WTC11 (cell line): ENCODE measurements at regions of chr14 and their contacts with region 1.

Region 1: DNA sequence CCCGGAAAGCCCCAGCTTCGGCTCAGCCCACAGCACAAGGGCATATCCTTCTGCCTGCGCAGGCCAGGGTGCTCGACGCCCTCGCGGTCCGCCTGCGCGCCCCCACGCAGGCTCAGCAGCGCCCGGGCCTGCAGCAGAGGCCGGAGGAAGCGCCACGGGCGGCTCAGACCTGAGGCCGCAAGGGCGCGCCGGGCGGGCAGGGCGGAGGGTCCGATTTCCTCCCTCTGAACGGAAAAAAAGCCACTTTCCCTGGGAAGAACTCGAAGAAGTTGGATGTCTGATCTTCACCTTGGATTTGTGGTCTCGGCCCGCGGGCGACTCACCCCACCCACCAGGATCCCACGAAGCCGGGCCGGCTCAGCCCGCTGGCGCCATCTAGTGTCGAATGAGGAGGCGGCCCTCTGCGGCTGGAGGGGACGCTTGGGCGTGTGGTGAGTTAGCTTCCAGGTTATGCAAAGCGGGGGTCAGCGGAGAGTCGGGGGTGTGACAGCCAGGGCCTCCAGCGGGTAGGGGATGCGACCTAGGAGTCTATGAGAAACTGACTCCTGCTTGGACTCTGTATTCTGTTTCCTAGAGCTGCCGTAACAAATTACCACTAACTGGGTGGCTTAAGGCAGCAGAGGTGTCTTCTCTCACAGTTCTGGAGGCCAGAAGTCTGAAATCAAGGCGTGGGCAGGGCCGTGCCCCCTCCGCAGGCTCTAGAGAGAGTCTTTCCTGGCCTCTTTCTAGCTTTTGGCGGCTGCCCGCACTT is 40.0 kb upstream of the SRSF5 start:
- DNase-seq: peak; percentile 87
- ATAC-seq: peak; percentile 95
- H3K4me3 Mint-ChIP-seq: peak overlapping the region; percentile 54
- H3K27ac Mint-ChIP-seq: no peak overlapping the region
- H3K4me1 Mint-ChIP-seq: 0 out of 2 replicates have a peak, but pooled peaks cover 3% of the 10 kb centered on the region
- H3K27me3 Mint-ChIP-seq: peaks cover 19% of the 10 kb centered on the region
- CTCF ChIP-seq: peak; percentile 69

Region 2: GRCh38 chr14:69580009-69580577 is 146.8 kb before region 1 on chr14:
- CTCF ChIA-PET with region 1: interaction called, 25 read pairs
- POLR2A ChIA-PET with region 1: no interaction called
- DNase-seq: peak; percentile 73
- ATAC-seq: peak; percentile 98
- H3K4me3 Mint-ChIP-seq: no peak overlapping the region
- H3K27ac Mint-ChIP-seq: no peak overlapping the region
- H3K4me1 Mint-ChIP-seq: peaks cover 11% of the 10 kb centered on the region
- H3K27me3 Mint-ChIP-seq: peaks cover 15% of the 10 kb centered on the region
- CTCF ChIP-seq: peak; percentile 52; the same call in 1 of the 2 replicates

Region 3: DNA sequence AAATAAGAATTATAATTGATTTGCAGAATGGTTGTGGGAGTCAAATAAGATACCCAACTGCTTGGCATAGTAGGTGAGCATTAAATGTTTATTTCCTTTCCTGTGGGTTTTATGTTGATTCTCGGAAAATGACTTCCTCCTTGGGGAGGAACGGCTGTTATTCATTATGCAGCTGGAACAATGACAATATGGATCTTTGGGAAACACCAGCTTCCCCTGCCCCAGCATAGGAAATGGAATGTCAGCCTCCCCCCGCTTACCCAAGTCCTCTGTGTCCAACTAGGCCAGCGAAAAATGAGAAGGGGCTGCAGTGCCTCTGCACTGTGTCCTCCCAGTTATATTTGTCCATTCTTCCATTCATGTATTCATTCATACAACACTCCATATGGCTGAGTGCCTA is 140.5 kb before region 1 on chr14:
- CTCF ChIA-PET with region 1: interaction called, 25 read pairs
- POLR2A ChIA-PET with region 1: no interaction called
- DNase-seq: no peak
- ATAC-seq: no peak
- H3K4me3 Mint-ChIP-seq: no peak overlapping the region
- H3K27ac Mint-ChIP-seq: no peak overlapping the region
- H3K4me1 Mint-ChIP-seq: peaks cover 4% of the 10 kb centered on the region
- H3K27me3 Mint-ChIP-seq: no peaks in the 10 kb centered on the region
- CTCF ChIP-seq: no peak

Region 4: GRCh38 chr14:69606258-69607184 is 120.4 kb before region 1 on chr14:
- CTCF ChIA-PET with region 1: interaction called, 39 read pairs
- POLR2A ChIA-PET with region 1: no interaction called
- DNase-seq: no peak
- ATAC-seq: no peak
- H3K4me3 Mint-ChIP-seq: no peak overlapping the region
- H3K27ac Mint-ChIP-seq: peak overlapping the region; percentile 74
- H3K4me1 Mint-ChIP-seq: peaks cover 22% of the 10 kb centered on the region
- H3K27me3 Mint-ChIP-seq: no peaks in the 10 kb centered on the region
- CTCF ChIP-seq: no peak

Region 5: GRCh38 chr14:69712599-69713088 is 14.3 kb before region 1 on chr14:
- CTCF ChIA-PET with region 1: interaction called, 19 read pairs
- POLR2A ChIA-PET with region 1: no interaction called
- DNase-seq: peak; percentile 45
- ATAC-seq: peak; percentile 64
- H3K4me3 Mint-ChIP-seq: peak overlapping the region; percentile 21; the same call in 1 of the 2 replicates
- H3K27ac Mint-ChIP-seq: peak overlapping the region; percentile 97
- H3K4me1 Mint-ChIP-seq: peaks cover 72% of the 10 kb centered on the region
- H3K27me3 Mint-ChIP-seq: no peaks in the 10 kb centered on the region
- CTCF ChIP-seq: no peak